ENCODE measurements at regions of chr2 and their contacts with region 1.

Region 1: DNA sequence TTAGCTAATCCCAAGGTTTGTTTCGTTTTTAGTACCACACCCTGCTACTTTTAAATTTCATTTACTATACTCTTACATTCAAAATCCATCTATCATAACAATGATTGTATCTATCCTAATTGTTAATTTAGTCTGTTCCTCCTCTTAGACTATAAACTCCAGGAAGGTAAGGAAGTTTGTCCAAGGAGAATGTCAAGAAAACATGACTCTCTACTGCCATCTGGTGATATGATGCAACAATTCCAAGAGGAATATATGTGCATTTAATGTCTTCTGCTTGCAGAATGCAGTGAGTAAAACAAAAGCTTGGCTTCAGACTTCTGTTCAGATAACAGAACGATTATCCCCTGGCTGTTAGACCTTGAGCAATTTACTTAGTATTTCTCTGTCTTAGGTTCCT is 1267.1 kb downstream of the LRP1B start:
- DNase-seq: no peak
- ATAC-seq: no peak
- H3K4me3 ChIP-seq: no peak overlapping the region
- H3K27ac ChIP-seq: no peak overlapping the region
- H3K4me1 ChIP-seq: no peaks in the 10 kb centered on the region
- H3K27me3 ChIP-seq: no peaks in the 10 kb centered on the region
- CTCF ChIP-seq: peak; percentile 24 to 59 (median 46)
- POLR2A ChIP-seq: no peak

Region 2: DNA sequence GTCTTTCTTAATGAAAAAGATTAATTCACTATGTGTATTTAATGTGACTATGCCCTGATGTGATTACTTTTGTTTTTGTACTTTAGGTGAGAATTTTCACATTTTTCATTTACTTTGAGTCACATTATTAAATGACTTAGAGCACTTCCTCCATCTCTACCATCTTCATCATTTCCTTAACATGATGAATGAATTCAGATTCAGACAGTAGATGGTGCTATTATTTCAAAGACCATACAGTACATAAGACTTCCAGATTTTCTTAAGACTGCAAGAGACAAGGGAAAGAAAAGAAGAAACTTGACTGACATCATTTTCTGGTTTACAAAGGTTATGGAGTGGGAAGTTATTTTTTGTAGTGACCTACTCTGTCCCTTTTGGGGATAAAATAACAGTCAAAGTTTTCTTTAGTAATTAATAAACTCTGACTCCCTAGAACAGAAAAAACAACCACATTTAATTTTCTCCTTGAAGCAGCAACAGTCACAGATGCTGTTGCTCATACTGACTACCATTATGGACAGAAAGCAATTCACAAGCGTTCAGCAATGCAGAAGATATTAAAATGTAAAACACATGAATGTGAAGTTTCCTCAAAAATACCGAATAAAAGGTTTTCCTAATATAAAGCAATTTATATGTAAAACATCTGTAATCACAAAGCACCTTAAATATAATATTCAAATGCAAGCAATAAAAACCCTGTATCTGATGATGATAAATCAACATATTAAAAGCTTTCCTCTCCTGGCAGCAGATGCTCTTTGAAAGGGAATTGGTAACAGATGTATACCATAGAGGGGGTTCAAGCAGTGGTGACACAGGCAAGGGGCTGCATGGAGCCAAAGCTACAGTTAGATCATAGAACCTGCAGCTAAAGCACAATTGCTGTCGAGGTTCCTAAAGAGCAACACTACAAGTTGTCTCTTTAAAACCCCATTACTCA is 1072.6 kb before region 1 on chr2:
- intact Hi-C with region 1: loop called in 1 of 10 experiments (anchors 10 kb)
- DNase-seq: no peak
- ATAC-seq: no peak
- H3K4me3 ChIP-seq: no peak overlapping the region
- H3K27ac ChIP-seq: no peak overlapping the region
- H3K4me1 ChIP-seq: no peaks in the 10 kb centered on the region
- H3K27me3 ChIP-seq: no peaks in the 10 kb centered on the region
- CTCF ChIP-seq: peak in 6 of 12 donors; percentile 12 to 40 (median 28)
- POLR2A ChIP-seq: no peak

Region 3: DNA sequence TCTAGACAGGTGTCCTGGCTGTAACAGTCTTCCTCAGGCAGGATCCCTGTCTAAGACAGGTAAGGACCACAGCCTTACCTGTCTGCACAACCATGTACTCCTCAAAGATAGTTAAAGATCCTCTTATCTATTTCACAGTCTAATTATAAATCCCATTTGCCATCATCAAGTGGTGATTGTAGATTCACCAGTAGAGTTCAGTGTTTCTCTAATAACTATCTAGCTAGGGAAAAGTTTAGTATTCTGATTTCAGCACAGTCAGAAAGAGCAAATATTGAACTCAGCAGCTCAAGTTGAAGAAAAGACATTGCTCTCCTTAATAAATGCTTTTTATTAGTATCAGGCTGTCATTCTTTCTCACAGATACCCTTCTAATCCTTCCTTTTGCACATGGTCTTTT is 778.0 kb before region 1 on chr2:
- intact Hi-C with region 1: loop called in 1 of 10 experiments (anchors 5 kb)
- DNase-seq: no peak
- ATAC-seq: no peak
- H3K4me3 ChIP-seq: no peak overlapping the region
- H3K27ac ChIP-seq: no peak overlapping the region
- H3K4me1 ChIP-seq: no peaks in the 10 kb centered on the region
- H3K27me3 ChIP-seq: no peaks in the 10 kb centered on the region
- CTCF ChIP-seq: peak in 1 of 12 donors; percentile 5
- POLR2A ChIP-seq: no peak

Region 4: DNA sequence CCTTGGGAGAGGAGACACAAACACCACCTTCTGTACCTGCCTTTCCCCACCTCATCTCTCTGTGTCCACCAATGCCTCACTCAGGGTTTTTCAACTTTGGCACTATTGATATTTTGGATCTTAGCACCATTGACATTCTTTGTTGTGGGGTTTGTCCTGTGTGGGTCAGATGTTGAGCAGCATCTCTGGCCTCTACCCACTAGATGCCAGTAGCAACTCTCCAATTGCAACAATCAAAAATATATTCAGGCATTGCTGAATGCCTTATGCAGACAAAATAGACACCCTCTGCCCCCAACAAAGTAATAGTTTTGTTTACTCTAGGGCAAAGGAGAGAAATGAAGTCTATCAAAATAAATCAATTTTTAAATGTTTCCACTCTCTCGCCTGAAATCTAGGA is 699.3 kb before region 1 on chr2:
- intact Hi-C with region 1: loop called in 2 of 10 experiments (anchors 5 kb)
- DNase-seq: no peak
- ATAC-seq: no peak
- H3K4me3 ChIP-seq: no peak overlapping the region
- H3K27ac ChIP-seq: no peak overlapping the region
- H3K4me1 ChIP-seq: no peaks in the 10 kb centered on the region
- H3K27me3 ChIP-seq: no peaks in the 10 kb centered on the region
- CTCF ChIP-seq: peak in 5 of 12 donors; percentile 7 to 31 (median 21)
- POLR2A ChIP-seq: no peak

Region 5: GRCh38 chr2:141162314-141162713 is 298.6 kb after region 1 on chr2:
- intact Hi-C with region 1: no loop called
- DNase-seq: no peak
- ATAC-seq: no peak
- H3K4me3 ChIP-seq: no peak overlapping the region
- H3K27ac ChIP-seq: no peak overlapping the region
- H3K4me1 ChIP-seq: no peaks in the 10 kb centered on the region
- H3K27me3 ChIP-seq: no peaks in the 10 kb centered on the region
- CTCF ChIP-seq: no peak
- POLR2A ChIP-seq: no peak